ENCODE measurements at regions of chr17 and their contacts with region 1.

Region 1: GRCh38 chr17:71900621-71901229 is 220.1 kb upstream of the SOX9 start:
- DNase-seq: no peak
- H3K4me3 Mint-ChIP-seq: no peak overlapping the region
- H3K27ac Mint-ChIP-seq: no peak overlapping the region
- H3K4me1 Mint-ChIP-seq: no peaks in the 10 kb centered on the region
- H3K27me3 Mint-ChIP-seq: no peaks in the 10 kb centered on the region

Region 2: GRCh38 chr17:71787427-71787826 is 113.3 kb before region 1 on chr17:
- intact Hi-C with region 1: loop called (anchors 10 kb)
- DNase-seq: no peak
- H3K4me3 Mint-ChIP-seq: no peak overlapping the region
- H3K27ac Mint-ChIP-seq: no peak overlapping the region
- H3K4me1 Mint-ChIP-seq: no peaks in the 10 kb centered on the region
- H3K27me3 Mint-ChIP-seq: no peaks in the 10 kb centered on the region